Activated T-helper 1 cell treated with anti-CD3 and anti-CD28 coated beads, Interleukin-12 subunit alpha, Interleukin-12 subunit beta, Interleukin-2, Interleukin-4 antibody, amounts not matched to agents 30 ng/mL and 10 ng/mL and 1 ng/mL, durations not matched to agents 14 hours and 24 hours and 36 hours (primary cell): ENCODE measurements at regions of chr13 and their contacts with region 1.

Region 1: DNA sequence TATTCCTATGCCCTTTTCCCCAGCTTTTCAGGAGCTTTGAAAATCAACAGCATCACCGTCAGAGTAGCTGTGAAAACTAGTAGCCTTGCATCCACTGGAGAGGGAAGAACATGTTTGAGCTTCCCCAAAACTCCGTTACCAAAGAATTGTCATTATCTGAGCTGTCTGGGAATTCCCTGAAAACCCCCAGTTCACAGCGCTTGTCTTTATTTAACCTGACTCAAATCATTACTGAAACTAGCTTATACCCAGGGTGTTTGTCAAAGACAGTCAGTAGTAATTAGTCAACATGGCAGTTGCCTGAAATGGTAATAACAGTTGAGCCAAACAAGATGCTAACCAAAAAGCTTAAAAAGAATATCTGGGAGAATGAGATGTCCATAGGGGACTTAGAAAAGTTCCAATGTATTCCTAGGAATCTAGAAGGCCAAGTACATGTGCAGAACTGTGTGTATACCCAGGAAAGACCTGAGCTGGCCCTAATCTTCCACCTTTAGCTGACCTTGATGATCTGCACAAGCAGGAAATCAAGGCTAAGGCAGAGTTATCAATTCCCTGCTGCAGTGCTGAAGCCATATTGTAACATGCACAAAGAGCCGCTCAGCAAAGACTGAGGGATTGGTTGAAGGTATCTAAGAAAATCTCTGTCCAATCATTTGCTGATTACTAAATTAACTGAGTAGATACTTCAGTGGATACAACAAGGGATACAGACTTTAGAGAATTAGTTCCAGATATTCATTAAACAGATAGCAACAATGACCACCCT is 130.8 kb downstream of the KL start:
- DNase-seq: peak; percentile 25
- H3K4me3 Mint-ChIP-seq: peak overlapping the region; percentile 20
- H3K27ac Mint-ChIP-seq: peak overlapping the region; percentile 81
- H3K4me1 Mint-ChIP-seq: peaks cover 41% of the 10 kb centered on the region
- H3K27me3 Mint-ChIP-seq: no peaks in the 10 kb centered on the region

Region 2: DNA sequence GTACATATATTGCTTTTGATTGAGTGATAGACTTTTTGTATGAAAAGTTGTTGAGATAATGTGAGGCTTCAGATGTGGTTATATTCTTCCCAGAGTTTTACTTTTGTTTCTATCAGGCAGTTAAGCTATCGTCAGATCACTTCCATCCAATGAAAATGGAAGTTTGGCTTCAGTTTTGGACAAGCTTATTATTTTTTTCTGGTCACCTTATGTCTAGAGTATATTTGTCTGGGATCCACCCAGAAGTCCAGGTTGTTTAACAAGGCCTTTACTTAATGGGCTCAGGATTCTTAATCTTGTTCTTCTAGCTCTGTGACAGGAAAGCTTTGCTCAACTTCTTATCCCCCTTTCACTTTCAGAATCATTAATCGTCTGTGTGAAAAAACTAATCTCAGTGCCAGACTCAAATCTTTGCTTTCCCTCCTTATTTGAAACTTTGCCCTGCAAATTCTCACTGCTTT is 409.9 kb before region 1 on chr13:
- intact Hi-C with region 1: loop called (anchors 5 kb)
- DNase-seq: no peak
- H3K4me3 Mint-ChIP-seq: peak overlapping the region; percentile 74
- H3K27ac Mint-ChIP-seq: peak overlapping the region; percentile 80
- H3K4me1 Mint-ChIP-seq: peaks cover 38% of the 10 kb centered on the region
- H3K27me3 Mint-ChIP-seq: no peaks in the 10 kb centered on the region

Region 3: DNA sequence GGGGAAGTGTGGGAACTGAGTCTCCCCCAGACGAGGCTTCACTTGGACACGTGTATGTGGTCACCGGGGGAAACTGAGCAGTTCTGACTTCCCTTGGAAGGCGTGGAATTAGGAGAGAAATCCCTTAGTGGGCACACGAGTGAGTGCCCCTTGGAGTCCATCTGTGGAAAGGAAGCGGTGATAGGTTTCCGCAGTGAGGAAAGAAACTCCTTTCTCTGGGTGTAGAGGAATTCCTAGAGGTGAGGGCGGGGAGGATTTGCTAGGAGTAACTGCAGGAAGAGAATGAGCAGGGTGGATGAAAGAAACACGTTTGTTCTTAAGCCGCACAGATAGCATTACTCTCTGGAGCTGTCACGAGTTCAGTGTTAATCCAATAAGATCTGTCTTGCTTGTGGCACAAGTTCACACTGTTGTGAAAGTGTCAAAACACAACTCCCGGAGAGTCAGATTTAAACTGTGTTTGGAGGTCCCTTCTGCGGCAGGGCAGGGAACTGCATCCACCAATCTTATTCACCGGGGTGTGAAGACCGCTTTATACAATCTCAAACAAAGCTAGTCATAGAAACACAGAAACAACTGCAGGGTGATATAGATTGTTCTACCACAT is 129.6 kb before region 1 on chr13:
- intact Hi-C with region 1: loop called (anchors 1 kb)
- DNase-seq: peak; percentile 29
- H3K4me3 Mint-ChIP-seq: peak overlapping the region; percentile 78
- H3K27ac Mint-ChIP-seq: peak overlapping the region; percentile 41
- H3K4me1 Mint-ChIP-seq: peaks cover 21% of the 10 kb centered on the region
- H3K27me3 Mint-ChIP-seq: peaks cover 56% of the 10 kb centered on the region

Region 4: DNA sequence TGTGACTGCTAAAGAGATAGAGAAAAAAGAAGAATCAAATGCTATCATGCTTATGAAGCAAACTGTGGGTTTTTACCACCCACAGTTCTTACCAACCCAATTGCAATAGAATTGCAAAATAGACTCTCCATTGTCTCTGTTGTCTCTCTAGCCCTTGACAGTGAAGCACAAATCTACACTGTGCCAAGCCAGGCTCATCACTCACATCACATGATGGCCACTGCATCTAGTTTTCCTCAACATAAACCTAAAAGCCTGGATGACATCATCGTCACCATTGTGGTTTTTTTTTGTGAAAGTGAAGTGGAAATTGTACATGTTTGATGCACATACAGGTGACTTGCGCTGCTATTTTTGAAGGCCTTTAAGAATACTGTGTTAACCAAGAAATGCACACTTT is 74.7 kb before region 1 on chr13:
- intact Hi-C with region 1: loop called (anchors 2 kb)
- DNase-seq: peak; percentile 3
- H3K4me3 Mint-ChIP-seq: no peak overlapping the region
- H3K27ac Mint-ChIP-seq: peak overlapping the region; percentile 55
- H3K4me1 Mint-ChIP-seq: peaks cover 35% of the 10 kb centered on the region
- H3K27me3 Mint-ChIP-seq: no peaks in the 10 kb centered on the region

Region 5: GRCh38 chr13:33080972-33081590 is 65.9 kb before region 1 on chr13:
- intact Hi-C with region 1: loop called (anchors 1 kb)
- DNase-seq: no peak
- H3K4me3 Mint-ChIP-seq: no peak overlapping the region
- H3K27ac Mint-ChIP-seq: no peak overlapping the region
- H3K4me1 Mint-ChIP-seq: peaks cover 18% of the 10 kb centered on the region
- H3K27me3 Mint-ChIP-seq: peaks cover 9% of the 10 kb centered on the region

Region 6: DNA sequence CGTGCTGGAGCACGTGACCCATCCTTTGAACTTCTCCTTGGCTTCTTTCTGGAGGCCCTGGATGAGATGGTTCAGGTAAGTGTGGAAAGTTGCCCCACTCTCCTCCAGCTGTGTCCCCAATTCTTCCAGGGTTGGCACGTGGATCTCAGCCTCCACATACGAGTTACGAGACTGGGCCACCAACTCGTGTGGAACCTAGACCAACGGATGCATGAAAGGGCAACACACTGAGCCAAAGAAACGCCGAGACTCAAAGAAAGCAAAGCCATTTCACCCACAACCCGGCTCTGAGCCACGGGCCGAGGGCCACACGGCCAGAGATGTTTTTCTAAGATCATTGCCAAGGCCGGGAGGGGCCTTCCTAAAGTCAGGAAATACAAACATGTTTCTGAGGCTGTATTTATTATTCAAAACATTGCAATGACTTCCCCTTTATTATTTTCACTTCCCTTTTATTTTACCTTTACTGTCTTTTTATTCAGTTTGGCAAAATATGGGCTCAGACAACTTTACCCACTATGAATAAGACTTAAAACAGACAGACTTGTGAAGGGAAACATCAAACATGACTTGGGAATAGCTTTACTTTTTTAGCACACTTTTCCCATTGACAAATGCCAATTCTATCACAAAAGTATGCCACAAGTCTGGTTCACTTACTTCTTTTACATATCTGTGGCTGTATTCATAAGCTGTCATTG is 36.2 kb before region 1 on chr13:
- intact Hi-C with region 1: no loop called
- DNase-seq: no peak
- H3K4me3 Mint-ChIP-seq: no peak overlapping the region
- H3K27ac Mint-ChIP-seq: no peak overlapping the region
- H3K4me1 Mint-ChIP-seq: no peaks in the 10 kb centered on the region
- H3K27me3 Mint-ChIP-seq: peaks cover 1% of the 10 kb centered on the region

Region 7: GRCh38 chr13:33132644-33133440 is 14.2 kb before region 1 on chr13:
- intact Hi-C with region 1: loop called (anchors 1 kb)
- DNase-seq: no peak
- H3K4me3 Mint-ChIP-seq: no peak overlapping the region
- H3K27ac Mint-ChIP-seq: peak overlapping the region; percentile 80
- H3K4me1 Mint-ChIP-seq: peaks cover 8% of the 10 kb centered on the region
- H3K27me3 Mint-ChIP-seq: no peaks in the 10 kb centered on the region

Region 8: DNA sequence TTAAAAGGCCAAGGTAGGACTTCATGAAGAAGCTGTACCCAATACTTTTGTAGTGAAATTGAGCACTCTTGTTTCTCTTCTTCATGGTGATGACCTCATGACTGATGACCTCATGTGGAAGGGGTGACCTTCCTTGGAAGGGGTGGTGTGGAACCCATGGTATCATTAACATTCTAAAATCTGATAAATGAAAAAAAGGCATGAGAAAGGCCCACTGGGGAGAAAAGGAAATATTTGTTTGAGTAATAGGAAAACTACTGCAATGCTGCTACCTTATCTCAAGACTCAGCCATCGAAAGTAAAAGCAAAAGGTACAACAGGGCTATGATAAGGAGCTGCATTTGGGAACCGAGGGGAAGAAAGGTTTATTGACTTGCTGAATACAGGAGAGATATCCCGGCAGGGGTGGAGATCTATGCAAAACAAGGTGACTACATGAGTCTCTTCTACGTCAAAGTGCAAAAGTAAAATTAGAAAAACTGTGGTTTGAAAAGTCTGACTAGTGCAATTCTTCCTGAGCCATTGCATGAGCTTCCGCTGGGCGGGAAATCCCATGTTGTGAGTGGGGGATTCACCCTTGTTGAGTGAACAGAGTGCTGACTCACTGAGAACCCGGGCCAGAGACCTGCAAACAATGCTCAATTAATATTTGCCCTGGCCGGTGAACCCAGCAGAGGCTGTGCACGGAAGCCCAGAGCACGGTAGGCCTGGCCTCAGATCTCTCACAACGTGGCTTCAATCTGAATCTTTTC is 532.1 kb after region 1 on chr13:
- intact Hi-C with region 1: loop called (anchors 5 kb)
- DNase-seq: peak; percentile 71
- H3K4me3 Mint-ChIP-seq: peak overlapping the region; percentile 73
- H3K27ac Mint-ChIP-seq: peak overlapping the region; percentile 91
- H3K4me1 Mint-ChIP-seq: peaks cover 36% of the 10 kb centered on the region
- H3K27me3 Mint-ChIP-seq: peaks cover 2% of the 10 kb centered on the region